Endothelial cell of umbilical vein (primary cell): ENCODE measurements at regions of chr13 and their contacts with region 1.

Region 1: DNA sequence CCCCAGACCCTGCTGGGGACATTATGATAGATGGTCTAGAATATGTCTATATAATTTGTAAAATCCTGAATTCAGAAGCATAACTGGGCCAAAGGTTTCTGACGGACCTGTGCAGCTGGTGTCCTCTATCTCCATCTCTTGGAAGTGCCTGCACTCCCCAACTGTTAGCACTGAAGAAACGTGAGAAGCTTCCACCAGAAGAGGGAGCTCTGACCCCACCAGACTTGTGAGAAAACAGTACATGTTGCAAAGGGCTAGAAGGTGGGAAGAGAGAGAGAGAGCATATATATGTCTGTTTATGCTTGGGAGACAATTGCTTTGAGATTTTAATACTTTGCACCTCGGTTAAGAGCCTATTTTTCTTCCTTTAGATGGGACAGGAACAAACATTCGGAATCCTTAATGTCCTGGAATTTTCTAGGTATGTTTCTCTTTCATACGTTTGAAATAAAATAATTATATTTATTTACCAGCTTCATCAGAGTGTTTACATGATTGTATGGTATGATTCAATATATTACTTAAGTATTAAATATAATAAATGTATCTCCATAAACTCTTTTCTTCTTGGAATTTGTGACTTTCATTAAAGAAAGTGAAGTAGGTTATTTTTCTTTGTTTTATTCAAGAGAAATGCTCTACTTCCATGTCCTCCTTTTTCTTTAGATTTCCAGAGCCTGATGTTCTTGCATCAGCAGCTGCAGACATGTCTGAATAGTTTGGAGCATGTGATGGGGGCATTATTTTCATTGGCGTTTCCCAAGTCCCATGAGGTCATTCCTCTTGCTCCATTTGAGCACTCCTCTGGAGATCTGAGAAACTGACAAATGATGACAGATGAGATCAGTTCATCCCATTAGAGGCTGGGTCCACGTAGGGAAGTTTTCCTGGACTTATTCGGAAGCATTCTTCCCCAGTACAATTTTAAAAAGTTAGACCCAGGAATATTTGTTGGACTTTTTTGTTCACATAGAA is 202.9 kb downstream of the ATP8A2 start:
- DNase-seq: peak; percentile 80
- H3K4me3 ChIP-seq: no peak overlapping the region
- H3K27ac ChIP-seq: no peak overlapping the region
- H3K4me1 ChIP-seq: no peaks in the 10 kb centered on the region
- H3K27me3 ChIP-seq: peaks cover 2% of the 10 kb centered on the region in 2 experiments
- CTCF ChIP-seq: peak; percentile 72 to 78
- POLR2A ChIP-seq: no peak

Region 2: DNA sequence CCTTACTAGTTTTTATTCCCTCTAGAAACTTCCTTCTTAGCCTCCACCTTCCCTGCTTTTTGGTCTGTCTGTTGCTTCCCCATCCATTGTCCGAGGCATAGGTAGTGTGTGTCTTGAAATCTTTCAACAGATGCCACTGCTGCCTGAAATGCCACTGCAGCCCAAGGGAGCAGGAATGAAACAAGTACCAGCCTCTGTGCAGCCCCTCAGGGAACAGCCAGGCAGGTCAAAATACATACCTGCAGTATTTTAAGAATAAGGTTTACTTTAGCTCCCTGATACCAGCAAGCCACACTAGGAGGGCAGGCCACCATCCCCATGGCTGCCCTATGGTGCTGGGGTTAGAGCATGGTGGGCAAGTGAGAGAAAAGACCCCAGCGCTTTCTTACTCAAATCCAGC is 95.0 kb after region 1 on chr13:
- CTCF ChIA-PET with region 1: no interaction called
- POLR2A ChIA-PET with region 1: no interaction called
- dilution Hi-C with region 1: no loop called
- intact Hi-C with region 1: no loop called
- DNase-seq: no peak
- H3K4me3 ChIP-seq: no peak overlapping the region
- H3K27ac ChIP-seq: no peak overlapping the region
- H3K4me1 ChIP-seq: no peaks in the 10 kb centered on the region
- H3K27me3 ChIP-seq: no peaks in the 10 kb centered on the region
- CTCF ChIP-seq: no peak
- POLR2A ChIP-seq: no peak

Region 3: GRCh38 chr13:25819856-25820530 is 245.3 kb after region 1 on chr13:
- CTCF ChIA-PET with region 1: interaction called, 5 read pairs
- POLR2A ChIA-PET with region 1: no interaction called
- dilution Hi-C with region 1: no loop called
- intact Hi-C with region 1: loop called (anchors 10 kb)
- DNase-seq: no peak
- H3K4me3 ChIP-seq: no peak overlapping the region
- H3K27ac ChIP-seq: no peak overlapping the region
- H3K4me1 ChIP-seq: no peaks in the 10 kb centered on the region
- H3K27me3 ChIP-seq: peaks cover 0 to 6% of the 10 kb centered on the region in 2 experiments
- CTCF ChIP-seq: no peak
- POLR2A ChIP-seq: no peak

Region 4: GRCh38 chr13:26062844-26063444 is 488.2 kb after region 1 on chr13:
- CTCF ChIA-PET with region 1: interaction called, 53 read pairs
- POLR2A ChIA-PET with region 1: no interaction called
- dilution Hi-C with region 1: no loop called
- intact Hi-C with region 1: loop called (anchors 1 kb)
- DNase-seq: peak; percentile 64
- H3K4me3 ChIP-seq: no peak overlapping the region
- H3K27ac ChIP-seq: no peak overlapping the region
- H3K4me1 ChIP-seq: peaks cover 5% of the 10 kb centered on the region
- H3K27me3 ChIP-seq: peaks cover 0 to 2% of the 10 kb centered on the region in 2 experiments
- CTCF ChIP-seq: peak; percentile 57 to 63
- POLR2A ChIP-seq: no peak

Region 5: DNA sequence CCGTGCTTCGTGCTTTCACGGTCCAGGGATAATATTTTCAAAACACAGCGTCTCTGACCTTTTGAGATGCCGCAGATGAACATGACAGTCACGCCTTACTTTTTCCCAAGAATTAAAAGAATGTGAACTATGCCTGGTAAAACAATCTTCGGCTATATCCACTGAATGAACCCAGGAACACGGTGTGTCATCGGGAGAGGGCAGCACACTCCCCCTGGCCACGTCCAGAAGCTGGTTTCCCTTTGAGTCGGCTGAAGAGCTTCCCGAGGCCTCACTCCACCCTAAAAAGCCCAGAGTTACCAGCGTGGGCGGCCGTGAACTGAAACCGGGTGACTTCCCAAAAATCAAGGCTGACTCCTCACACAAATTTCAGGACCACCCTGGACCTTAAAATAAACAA is 500.0 kb after region 1 on chr13:
- CTCF ChIA-PET with region 1: interaction called, 68 read pairs
- POLR2A ChIA-PET with region 1: no interaction called
- dilution Hi-C with region 1: no loop called
- intact Hi-C with region 1: loop called (anchors 1 kb)
- DNase-seq: no peak
- H3K4me3 ChIP-seq: no peak overlapping the region
- H3K27ac ChIP-seq: no peak overlapping the region
- H3K4me1 ChIP-seq: no peaks in the 10 kb centered on the region
- H3K27me3 ChIP-seq: peaks cover 0 to 2% of the 10 kb centered on the region in 2 experiments
- CTCF ChIP-seq: no peak
- POLR2A ChIP-seq: no peak